Adrenal gland (tissue), 19 donors: ENCODE measurements at regions of chr3 and their contacts with region 1.

Region 1: DNA sequence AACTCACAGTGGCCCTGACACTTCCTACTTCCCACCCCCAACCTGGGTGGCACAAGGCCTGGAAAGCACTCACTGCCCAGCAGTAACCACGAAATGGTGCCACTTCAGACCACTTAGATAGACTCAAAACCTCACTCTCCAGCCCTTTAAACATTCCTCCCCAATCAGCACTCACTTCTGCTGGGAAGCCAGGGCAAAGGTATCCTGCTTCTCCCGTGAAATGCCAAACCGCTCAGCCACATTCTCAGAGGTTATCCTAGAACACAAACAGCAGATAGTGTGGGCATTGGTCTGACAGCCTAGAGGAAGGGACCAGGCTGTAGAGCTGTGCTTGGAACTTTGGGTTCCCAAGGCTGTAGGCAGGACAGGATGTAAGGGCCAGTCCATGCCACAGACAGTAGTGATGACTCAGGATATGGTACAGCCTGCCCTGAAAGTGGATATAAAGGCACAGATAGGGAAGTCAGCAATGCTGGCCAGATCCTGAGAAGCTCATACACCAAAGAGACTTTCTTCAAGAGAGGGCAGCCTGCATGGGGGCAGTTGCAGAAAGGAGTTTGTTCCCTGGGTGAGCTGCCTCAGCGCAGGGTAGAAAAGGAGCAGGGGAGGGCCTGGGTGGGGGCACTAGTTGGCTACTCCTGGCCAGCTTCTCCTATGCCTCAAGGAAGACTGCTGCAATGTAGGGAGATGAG is 9.2 kb downstream of the ACAA1 start:
- DNase-seq: peak in 1 of 7 donors; percentile 19
- H3K4me3 ChIP-seq: no peak overlapping the region
- H3K27ac ChIP-seq: peak overlapping the region in 1 of 5 donors; percentile 23
- H3K4me1 ChIP-seq: peaks cover 4 to 9% of the 10 kb centered on the region in 2 donors
- H3K27me3 ChIP-seq: no peaks in the 10 kb centered on the region
- CTCF ChIP-seq: no peak
- POLR2A ChIP-seq: no peak

Region 2: DNA sequence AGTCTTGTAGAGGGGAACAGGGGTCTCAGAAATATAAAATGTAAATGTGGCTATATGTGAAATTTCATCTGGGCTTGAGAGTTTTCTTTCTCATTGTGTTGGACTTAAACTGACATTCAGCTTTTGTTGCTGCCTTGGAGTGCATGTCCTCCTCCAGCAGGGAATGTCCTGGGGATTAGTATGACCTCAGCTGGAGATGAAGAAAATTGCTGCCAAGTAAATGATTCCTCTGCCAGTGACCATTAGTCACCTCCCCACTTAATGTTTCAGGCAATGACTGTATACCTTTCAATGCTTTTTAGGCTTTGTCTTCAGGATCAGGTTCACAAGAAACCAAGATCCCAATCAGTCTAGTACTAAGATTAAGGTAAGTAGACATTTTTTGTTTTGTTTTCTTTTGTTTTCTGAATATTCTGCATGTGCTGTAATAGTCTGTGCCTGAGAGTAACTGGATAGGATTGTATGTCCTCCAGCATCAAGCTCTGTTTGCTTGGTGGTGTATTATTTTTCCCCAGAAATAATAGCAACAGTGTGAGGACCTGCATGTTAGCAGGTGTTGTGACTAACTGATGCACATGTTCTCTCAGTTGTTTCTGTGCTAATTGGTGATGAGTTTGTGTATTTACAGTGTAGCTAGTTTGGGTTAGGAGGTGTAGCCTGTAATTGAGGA is 119.7 kb after region 1 on chr3:
- intact Hi-C with region 1: loop called in 1 of 2 experiments (anchors 10 kb)
- DNase-seq: peak; percentile 44 to 76 (median 61)
- H3K4me3 ChIP-seq: no peak overlapping the region
- H3K27ac ChIP-seq: peak overlapping the region in 2 of 5 donors; percentile 45 to 47
- H3K4me1 ChIP-seq: peaks cover 3 to 4% of the 10 kb centered on the region in 2 donors
- H3K27me3 ChIP-seq: no peaks in the 10 kb centered on the region
- CTCF ChIP-seq: peak in 5 of 6 experiments; percentile 28 to 51 (median 38)
- POLR2A ChIP-seq: no peak